ENCODE measurements at regions of chr12 and their contacts with region 1.

Region 1: DNA sequence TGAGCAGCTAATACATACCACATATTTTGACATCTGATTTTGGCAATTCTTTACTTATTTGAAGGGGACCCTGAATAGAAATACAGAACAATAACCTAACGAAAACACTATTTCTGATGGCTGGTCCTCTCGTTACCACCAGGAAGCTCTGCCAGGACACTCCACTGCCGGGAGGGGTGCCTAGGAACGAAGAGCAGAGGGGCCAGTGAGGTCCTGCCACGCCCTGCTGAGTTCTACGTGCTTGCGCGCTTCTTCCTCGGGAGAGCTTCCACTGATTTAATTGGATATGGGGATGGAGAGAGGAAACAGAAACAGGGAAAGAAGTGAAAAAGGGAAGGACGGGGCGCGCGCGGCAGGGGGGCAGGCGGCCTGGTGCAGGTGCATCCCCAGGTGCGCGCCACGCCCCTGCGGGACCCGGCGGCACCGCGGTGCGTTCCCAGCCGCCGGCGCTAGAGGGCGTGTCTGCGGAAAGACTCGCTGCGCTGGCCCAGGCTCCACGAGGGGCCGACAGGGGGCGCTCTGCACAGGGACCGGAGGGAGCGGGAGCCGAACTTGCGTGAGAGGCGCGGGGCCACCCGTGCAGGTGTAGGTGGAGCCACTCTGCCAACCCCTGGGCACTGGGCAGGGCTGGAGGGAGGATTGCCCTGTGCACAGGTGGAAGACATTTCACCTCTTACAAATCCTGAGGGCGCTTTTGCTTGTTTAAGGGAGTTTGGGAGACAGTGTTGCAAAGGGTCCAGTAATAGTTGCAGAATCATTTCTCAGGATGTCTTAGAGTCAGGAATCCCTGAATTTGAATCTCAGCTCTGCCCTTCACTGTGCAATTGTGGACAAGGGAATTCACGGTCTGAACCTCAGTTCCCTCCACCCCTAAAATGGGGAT is 986.3 kb upstream of the TMEM132C start:
- DNase-seq: no peak
- H3K4me3 ChIP-seq: no peak overlapping the region
- H3K27ac ChIP-seq: peak overlapping the region; percentile 10
- H3K4me1 ChIP-seq: peaks cover 44% of the 10 kb centered on the region
- H3K27me3 ChIP-seq: no peaks in the 10 kb centered on the region
- CTCF ChIP-seq: peak; percentile 32

Region 2: DNA sequence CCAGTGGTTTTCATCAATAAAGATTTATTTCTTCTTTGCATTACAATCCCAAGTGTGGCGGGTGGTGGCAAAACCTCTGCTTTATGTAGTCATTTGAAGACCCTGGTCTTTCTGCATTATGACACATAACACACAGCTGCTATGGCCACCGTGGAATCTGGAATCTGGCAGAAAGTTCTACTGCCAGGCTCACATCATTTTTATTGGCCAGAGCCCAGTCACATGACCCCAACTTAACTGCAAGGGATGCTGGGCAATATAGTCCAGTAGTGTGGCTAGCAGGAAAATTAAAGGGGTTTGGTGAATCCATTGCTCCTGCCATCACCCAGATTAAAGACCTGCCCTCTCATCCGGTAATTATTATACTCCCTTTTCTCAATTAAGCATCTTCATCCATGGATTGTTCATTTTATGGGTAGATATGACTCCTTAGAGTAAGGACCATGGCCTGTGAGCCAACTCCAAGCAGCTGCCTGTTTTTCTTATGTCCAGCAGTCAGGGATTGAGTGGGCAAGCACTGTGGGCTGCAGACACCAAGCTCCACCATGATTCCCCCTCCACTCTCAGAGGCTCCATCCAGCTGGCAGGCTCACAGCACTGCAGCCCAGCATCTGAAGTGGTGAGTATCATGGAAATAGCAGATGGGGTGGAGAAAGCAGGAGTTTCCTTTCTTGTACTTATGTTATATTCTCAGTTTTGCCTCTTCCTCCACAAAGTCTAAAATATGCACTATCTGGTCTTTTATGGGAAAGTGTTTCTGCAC is 1184.7 kb before region 1 on chr12:
- CTCF ChIA-PET with region 1: no interaction called
- POLR2A ChIA-PET with region 1: no interaction called
- intact Hi-C with region 1: loop called (anchors 5 kb)
- DNase-seq: no peak
- H3K4me3 ChIP-seq: no peak overlapping the region
- H3K27ac ChIP-seq: no peak overlapping the region
- H3K4me1 ChIP-seq: peaks cover 13% of the 10 kb centered on the region
- H3K27me3 ChIP-seq: no peaks in the 10 kb centered on the region
- CTCF ChIP-seq: no peak

Region 3: DNA sequence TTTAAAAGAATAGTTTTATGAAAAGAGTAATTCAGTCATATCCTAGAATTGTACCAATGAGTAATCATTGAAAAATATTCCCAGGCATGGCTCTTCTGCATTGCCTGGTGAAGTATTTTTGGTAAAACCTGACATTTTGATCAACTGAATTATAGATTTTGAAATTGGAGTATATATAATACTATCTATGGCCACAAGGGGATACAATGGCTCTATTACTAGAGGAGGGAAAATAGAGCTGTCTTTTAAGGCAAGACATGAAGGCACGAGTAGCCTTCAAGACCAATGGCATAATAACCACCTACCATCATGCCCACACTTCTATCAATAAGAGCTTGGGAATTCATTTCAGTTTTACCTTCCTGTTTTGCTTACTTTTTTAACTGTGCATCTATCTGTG is 255.1 kb before region 1 on chr12:
- CTCF ChIA-PET with region 1: no interaction called
- POLR2A ChIA-PET with region 1: no interaction called
- intact Hi-C with region 1: loop called (anchors 5 kb)
- DNase-seq: peak; percentile 21
- H3K4me3 ChIP-seq: no peak overlapping the region
- H3K27ac ChIP-seq: no peak overlapping the region
- H3K4me1 ChIP-seq: no peaks in the 10 kb centered on the region
- H3K27me3 ChIP-seq: no peaks in the 10 kb centered on the region
- CTCF ChIP-seq: peak; percentile 43

Region 4: GRCh38 chr12:127150028-127150427 is 130.6 kb before region 1 on chr12:
- CTCF ChIA-PET with region 1: no interaction called
- POLR2A ChIA-PET with region 1: interaction called, 5 read pairs
- intact Hi-C with region 1: loop called (anchors 2 kb)
- DNase-seq: no peak
- H3K4me3 ChIP-seq: no peak overlapping the region
- H3K27ac ChIP-seq: no peak overlapping the region
- H3K4me1 ChIP-seq: peaks cover 10% of the 10 kb centered on the region
- H3K27me3 ChIP-seq: no peaks in the 10 kb centered on the region
- CTCF ChIP-seq: no peak

Region 5: GRCh38 chr12:127191129-127191528 is 89.5 kb before region 1 on chr12:
- CTCF ChIA-PET with region 1: no interaction called
- POLR2A ChIA-PET with region 1: no interaction called
- intact Hi-C with region 1: no loop called
- DNase-seq: peak; percentile 63
- H3K4me3 ChIP-seq: no peak overlapping the region
- H3K27ac ChIP-seq: no peak overlapping the region
- H3K4me1 ChIP-seq: peaks cover 4% of the 10 kb centered on the region
- H3K27me3 ChIP-seq: no peaks in the 10 kb centered on the region
- CTCF ChIP-seq: no peak

Region 6: GRCh38 chr12:127411166-127411915 is 130.7 kb after region 1 on chr12:
- CTCF ChIA-PET with region 1: no interaction called
- POLR2A ChIA-PET with region 1: no interaction called
- intact Hi-C with region 1: no loop called
- DNase-seq: no peak
- H3K4me3 ChIP-seq: no peak overlapping the region
- H3K27ac ChIP-seq: no peak overlapping the region
- H3K4me1 ChIP-seq: no peaks in the 10 kb centered on the region
- H3K27me3 ChIP-seq: no peaks in the 10 kb centered on the region
- CTCF ChIP-seq: no peak

Measured in A673 (cell line).